Breast epithelium (tissue), 4 donors: ENCODE measurements at regions of chr2 and their contacts with region 1.

Region 1: GRCh38 chr2:12244070-12244469 is 472.7 kb upstream of the TRIB2 start:
- DNase-seq: no peak
- H3K4me3 ChIP-seq: no peak overlapping the region
- H3K27ac ChIP-seq: no peak overlapping the region
- H3K4me1 ChIP-seq: no peaks in the 10 kb centered on the region
- H3K27me3 ChIP-seq: no peaks in the 10 kb centered on the region
- CTCF ChIP-seq: no peak
- POLR2A ChIP-seq: no peak

Region 2: DNA sequence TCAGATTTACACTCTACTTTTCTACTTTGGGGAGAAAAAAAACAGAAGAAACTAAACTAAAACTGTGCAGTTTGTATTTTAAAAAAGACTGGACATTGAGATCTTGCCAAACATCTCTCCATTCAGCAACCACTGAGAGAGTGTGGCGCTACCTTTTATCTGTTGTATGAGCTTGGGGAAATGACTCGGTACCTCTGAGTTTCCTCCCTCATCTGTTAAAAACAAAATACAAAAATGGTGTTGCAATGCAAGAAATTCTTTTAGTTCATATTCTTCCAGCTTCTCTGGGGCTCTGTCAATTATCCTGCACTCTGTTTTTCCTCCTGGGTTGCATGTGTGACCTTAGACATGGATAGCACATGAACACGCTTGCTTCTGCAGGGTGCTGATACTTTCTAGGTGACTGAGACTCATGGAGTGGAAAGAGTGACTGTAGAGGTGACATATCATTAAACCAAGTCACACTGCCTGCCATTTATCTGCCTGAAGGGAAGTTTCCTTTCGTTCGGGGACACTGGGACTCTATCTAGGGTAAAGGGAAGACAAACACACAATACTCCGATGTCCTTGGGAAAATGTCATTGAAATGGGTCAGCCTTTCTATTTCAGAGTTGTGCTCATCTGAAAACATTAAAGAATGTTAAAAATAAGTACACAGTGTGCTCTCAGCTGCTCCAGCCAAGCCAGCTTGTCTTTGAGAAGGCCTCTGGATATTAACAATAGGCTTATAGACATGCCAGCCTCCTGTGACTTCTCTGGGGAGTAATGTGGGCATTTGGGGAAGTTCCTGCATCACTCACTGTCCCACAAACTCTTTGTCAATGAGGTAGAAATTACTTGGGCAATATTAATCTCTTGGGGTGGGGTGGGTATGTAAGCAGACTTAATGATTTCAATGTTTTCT is 564.1 kb after region 1 on chr2:
- intact Hi-C with region 1: loop called (anchors 5 kb)
- DNase-seq: no peak
- H3K4me3 ChIP-seq: no peak overlapping the region
- H3K27ac ChIP-seq: peak overlapping the region in 1 of 2 donors; percentile 79
- H3K4me1 ChIP-seq: no peaks in the 10 kb centered on the region
- H3K27me3 ChIP-seq: no peaks in the 10 kb centered on the region
- CTCF ChIP-seq: no peak
- POLR2A ChIP-seq: no peak